RWPE1 (cell line): ENCODE measurements at regions of chr15 and their contacts with region 1.

Region 1: GRCh38 chr15:78979456-78980320 is 34.8 kb upstream of the CTSH start:
- DNase-seq: peak; percentile 76
- H3K27ac ChIP-seq: peak overlapping the region; percentile 6; the same call in 1 of the 2 replicates
- CTCF ChIP-seq: peak; percentile 66

Region 2: GRCh38 chr15:78944669-78945407 is 34.9 kb before region 1 on chr15 and contains the start of gene CTSH:
- CTCF ChIA-PET with region 1: interaction called, 10 read pairs
- POLR2A ChIA-PET with region 1: no interaction called
- DNase-seq: peak; percentile 84
- H3K27ac ChIP-seq: peak within 1 kb of the TSS; percentile 2; the same call in 1 of the 2 replicates
- CTCF ChIP-seq: no peak